Panc1 (cell line): ENCODE measurements at regions of chr3 and their contacts with region 1.

Region 1: GRCh38 chr3:170037463-170038433 is at the start of gene GPR160:
- DNase-seq: peak; percentile 15
- ATAC-seq: peak; percentile 87
- H3K4me3 ChIP-seq: peak within 1 kb of the TSS; percentile 48 to 67
- H3K27ac ChIP-seq: no peak within 1 kb of the TSS
- H3K4me1 ChIP-seq: no peaks in the 10 kb centered on the region
- H3K27me3 ChIP-seq: peaks cover 20% of the 10 kb centered on the region
- CTCF ChIP-seq: peak; percentile 98
- total RNA-seq, gene GPR160: 0.18 TPM

Region 2: GRCh38 chr3:169863458-169863899 is 174.3 kb before region 1 on chr3:
- CTCF ChIA-PET with region 1: no interaction called
- POLR2A ChIA-PET with region 1: no interaction called
- in situ Hi-C with region 1: no loop called
- intact Hi-C with region 1: loop called (anchors 5 kb)
- DNase-seq: peak; percentile 61
- ATAC-seq: peak; percentile 82
- H3K4me3 ChIP-seq: no peak overlapping the region
- H3K27ac ChIP-seq: no peak overlapping the region
- H3K4me1 ChIP-seq: no peaks in the 10 kb centered on the region
- H3K27me3 ChIP-seq: peaks cover 6% of the 10 kb centered on the region
- CTCF ChIP-seq: peak; percentile 97